HEK293 (cell line): ENCODE measurements at regions of chr15 and their contacts with region 1.

Region 1: GRCh38 chr15:92797168-92797951 is 102.8 kb upstream of the CHD2 start:
- H3K4me3 ChIP-seq: no peak overlapping the region
- H3K27ac ChIP-seq: peak overlapping the region; percentile 18; the same call in 1 of the 2 replicates
- H3K4me1 ChIP-seq: no peaks in the 10 kb centered on the region
- CTCF ChIP-seq: 0 out of 2 replicates have a peak, but pooled peaks have one; percentile 48

Region 2: GRCh38 chr15:92808978-92809879 is 11.9 kb after region 1 on chr15:
- CTCF ChIA-PET with region 1: interaction called, 20 read pairs
- POLR2A ChIA-PET with region 1: interaction called, 9 read pairs
- H3K4me3 ChIP-seq: peak overlapping the region; percentile 48
- H3K27ac ChIP-seq: peak overlapping the region; percentile 97
- H3K4me1 ChIP-seq: peaks cover 28% of the 10 kb centered on the region
- CTCF ChIP-seq: peak; percentile 93; the same call in 1 of the 2 replicates

Region 3: DNA sequence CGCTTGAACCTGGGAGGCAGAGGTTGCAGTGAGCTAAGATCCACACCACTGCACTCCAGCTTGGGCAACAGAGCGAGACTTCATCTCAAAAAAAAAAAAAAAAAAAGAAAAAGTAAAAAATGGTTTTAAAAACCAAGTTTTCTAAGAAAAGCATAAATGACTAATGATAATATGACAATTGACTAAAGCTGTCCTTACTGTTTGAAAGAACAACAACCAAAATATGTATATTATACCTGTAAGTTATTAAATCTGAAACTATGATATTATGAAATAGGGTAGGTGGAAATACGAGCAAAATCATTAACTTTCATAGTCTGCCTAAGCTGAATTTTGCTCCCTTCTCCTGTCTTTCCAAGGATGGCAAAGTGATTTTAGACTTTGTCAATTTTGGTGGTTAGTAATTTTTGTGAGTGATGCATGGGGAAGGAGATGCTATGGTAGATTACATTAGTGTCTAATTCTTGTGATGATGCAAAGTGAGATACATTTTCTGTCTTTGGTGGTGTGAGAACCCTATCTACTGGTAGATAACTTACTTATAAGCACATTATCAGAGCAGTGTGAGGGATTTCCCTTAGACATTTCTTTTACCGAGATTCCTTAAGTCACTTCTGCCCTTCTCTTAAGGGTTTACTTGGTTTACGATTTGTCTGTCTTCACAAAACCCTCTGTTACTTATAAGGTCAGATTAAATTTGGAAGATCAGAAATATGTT is 92.2 kb after region 1 on chr15:
- CTCF ChIA-PET with region 1: interaction called, 10 read pairs
- POLR2A ChIA-PET with region 1: interaction called, 3 read pairs
- H3K4me3 ChIP-seq: no peak overlapping the region
- H3K27ac ChIP-seq: no peak overlapping the region
- H3K4me1 ChIP-seq: peaks cover 25% of the 10 kb centered on the region; the same call in 1 of the 2 replicates
- CTCF ChIP-seq: no peak

Region 4: DNA sequence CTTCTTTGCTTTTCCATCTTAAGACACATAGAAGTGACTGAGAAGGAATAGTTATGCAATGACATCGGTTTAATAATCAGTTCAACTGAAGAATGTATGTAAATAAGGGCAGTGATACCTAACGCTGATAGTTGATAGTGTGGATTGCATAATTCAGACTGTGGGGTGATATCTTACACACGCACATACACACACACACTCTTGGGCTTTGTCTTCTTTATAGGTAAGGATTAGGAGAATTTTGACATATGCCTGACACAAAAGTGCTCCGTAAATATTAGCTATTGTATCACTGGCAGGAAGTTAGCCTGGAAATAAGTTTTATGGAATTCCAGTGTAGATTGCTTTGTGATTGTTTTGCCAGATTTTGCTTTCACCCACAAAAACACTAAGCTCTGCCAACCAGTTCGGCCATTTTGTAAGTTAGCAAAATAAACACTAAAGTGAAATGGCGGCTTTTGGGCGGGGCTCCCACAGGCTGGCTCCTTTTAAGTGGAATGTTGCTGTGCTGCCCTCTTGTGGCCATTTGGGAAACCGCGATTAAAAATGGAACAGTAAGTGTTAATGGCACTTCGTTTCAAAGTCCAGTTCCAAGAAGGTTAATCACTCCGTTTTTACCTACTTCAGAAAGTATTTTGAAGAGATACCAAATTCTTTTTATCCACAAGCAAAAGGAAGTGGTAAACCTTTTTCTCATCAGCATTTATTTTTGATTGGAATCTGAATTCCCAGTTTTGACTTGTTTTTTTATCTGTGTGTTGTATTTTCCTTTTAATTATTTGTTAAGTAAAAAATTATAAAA is 120.4 kb after region 1 on chr15:
- CTCF ChIA-PET with region 1: interaction called, 86 read pairs
- POLR2A ChIA-PET with region 1: interaction called, 11 read pairs
- H3K4me3 ChIP-seq: no peak overlapping the region; the same call in 1 of the 2 replicates
- H3K27ac ChIP-seq: peak overlapping the region; percentile 88
- H3K4me1 ChIP-seq: peaks cover 48% of the 10 kb centered on the region
- CTCF ChIP-seq: peak; percentile 76; the same call in 1 of the 2 replicates

Region 5: DNA sequence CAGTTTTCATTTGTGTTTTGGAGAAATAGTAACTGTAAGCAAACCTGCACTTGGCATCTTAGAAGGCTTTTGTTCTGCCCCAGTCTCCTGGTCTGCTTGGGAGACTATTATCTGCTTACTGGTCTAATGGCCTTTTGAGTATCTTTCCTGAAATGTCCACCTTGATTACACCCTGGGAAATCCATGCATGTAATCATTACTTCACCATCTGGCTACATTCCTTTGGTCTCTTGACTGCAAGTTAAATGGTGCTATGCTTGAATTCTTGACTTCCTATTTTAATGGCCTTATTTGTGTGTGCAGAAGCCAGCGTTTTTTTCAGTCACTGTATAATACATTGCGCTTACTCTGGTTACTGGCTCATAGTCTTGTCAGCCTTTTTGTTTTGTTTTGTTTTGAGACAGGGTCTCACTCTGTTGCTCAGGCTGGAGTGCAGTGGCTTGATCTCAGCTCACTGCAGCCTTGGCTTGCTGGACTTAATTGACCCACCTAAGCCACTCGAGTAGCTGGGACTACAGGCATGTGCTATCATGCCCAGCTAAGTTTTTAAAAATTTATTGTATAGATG is 132.8 kb after region 1 on chr15:
- CTCF ChIA-PET with region 1: interaction called, 11 read pairs
- POLR2A ChIA-PET with region 1: no interaction called
- H3K4me3 ChIP-seq: no peak overlapping the region
- H3K27ac ChIP-seq: no peak overlapping the region; the same call in 1 of the 2 replicates
- H3K4me1 ChIP-seq: no peaks in the 10 kb centered on the region
- CTCF ChIP-seq: no peak

Region 6: GRCh38 chr15:93018580-93018979 is 221.2 kb after region 1 on chr15:
- CTCF ChIA-PET with region 1: interaction called, 12 read pairs
- POLR2A ChIA-PET with region 1: no interaction called
- H3K4me3 ChIP-seq: no peak overlapping the region
- H3K27ac ChIP-seq: peak overlapping the region; percentile 17; the same call in 1 of the 2 replicates
- H3K4me1 ChIP-seq: no peaks in the 10 kb centered on the region
- CTCF ChIP-seq: 0 out of 2 replicates have a peak, but pooled peaks have one; percentile 18

Region 7: DNA sequence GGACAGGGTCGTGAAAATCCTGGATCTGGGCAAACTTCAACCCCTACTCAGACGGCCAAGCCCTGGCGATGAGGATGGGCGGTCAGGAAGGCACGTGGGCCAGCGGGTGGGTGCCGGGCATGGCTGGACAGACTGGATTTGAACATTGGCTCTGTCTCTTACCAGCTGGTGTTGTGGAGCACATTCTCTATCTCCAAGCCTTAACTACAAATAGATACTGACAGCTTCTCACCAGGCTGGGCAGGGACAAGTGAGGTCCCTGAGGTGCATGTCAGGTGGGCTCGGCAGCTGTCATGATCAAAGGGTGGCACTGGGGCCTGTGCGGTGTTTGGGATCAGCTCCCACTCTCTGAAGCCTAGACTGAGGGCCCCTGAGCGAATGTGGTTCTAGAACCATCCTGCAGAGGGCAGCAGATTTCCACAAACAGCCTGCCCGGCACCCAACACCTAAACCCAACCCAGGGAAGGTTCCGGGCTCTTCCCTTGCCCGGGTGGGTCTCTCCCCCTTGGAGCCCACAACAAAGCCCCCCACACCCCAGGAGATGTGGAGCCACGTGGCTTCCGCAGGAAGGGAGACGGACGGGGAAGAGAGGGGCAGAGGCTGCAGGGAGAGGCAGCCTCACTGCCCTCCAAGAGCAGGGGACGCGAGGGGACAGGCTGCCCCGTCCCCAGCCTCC is 233.2 kb after region 1 on chr15:
- CTCF ChIA-PET with region 1: interaction called, 11 read pairs
- POLR2A ChIA-PET with region 1: no interaction called
- H3K4me3 ChIP-seq: no peak overlapping the region
- H3K27ac ChIP-seq: no peak overlapping the region
- H3K4me1 ChIP-seq: no peaks in the 10 kb centered on the region
- CTCF ChIP-seq: peak; percentile 88